Activated naive CD8-positive, alpha-beta T cell treated with anti-CD3 and anti-CD28 coated beads, Interleukin-2, amount 10 ng/mL, durations not matched to agents 7 days and 5 days (primary cell): ENCODE measurements at regions of chr5 and their contacts with region 1.

Region 1: DNA sequence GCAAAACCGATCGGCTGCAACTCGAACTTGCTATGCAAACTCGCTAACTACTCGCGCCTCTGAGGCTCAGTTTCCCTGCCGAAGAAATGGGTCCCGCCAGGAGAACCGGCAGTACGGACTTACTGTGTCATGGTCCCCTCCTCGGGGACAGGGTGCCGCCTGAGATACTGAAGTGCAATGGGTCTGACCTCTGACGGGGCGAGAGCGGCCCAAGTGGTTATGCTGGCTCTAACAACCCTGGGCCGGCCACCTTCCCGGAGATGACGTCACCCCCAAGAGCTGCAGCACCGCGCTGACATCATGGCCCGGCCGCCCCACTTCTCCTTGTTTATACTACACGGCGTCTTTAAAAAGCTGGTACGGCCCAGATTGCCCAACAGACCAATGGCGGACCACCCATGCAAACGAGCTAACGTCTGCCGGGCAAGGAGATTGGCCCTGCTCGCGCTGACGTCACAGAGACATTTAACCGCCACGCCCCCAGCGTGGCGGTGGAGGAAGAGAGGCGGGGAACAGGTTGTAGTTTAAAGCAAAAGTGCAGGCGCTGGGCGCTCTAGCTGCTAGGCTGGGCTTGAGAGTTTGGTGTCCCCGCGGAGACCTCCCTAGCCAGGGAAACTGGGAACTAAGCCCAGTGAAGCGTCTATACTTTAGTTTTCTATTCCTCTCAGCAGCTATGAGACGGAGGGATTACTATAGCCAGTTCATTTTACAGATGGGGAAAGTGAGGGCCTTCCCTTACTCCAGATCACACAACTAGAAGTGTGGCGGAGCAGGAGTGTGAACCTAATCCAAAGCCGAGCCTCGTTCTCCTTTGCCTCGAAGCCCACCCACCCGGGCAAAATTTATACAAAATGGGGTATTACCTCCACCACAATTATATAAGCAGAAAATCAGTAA is 654 bp upstream of the RNF44 start:
- DNase-seq: peak; percentile 89
- ATAC-seq: peak; percentile 70
- H3K4me3 Mint-ChIP-seq: peak overlapping the region; percentile 100
- H3K27ac Mint-ChIP-seq: peak overlapping the region; percentile 99
- H3K4me1 Mint-ChIP-seq: peaks cover 63% of the 10 kb centered on the region
- H3K27me3 Mint-ChIP-seq: no peaks in the 10 kb centered on the region

Region 2: GRCh38 chr5:176388444-176389134 is 149.3 kb before region 1 on chr5 and contains the starts of genes HIGD2A and NOP16:
- POLR2A ChIA-PET with region 1: interaction called, 13 read pairs
- DNase-seq: peak; percentile 94
- ATAC-seq: peak; percentile 91
- H3K4me3 Mint-ChIP-seq: peak within 1 kb of the TSS; percentile 100
- H3K27ac Mint-ChIP-seq: peak within 1 kb of the TSS; percentile 99
- H3K4me1 Mint-ChIP-seq: peaks cover 27% of the 10 kb centered on the region
- H3K27me3 Mint-ChIP-seq: no peaks in the 10 kb centered on the region
- total RNA-seq, gene HIGD2A: 97.6 to 97.7 TPM
- total RNA-seq, gene NOP16: 27.5 to 30.3 TPM

Region 3: DNA sequence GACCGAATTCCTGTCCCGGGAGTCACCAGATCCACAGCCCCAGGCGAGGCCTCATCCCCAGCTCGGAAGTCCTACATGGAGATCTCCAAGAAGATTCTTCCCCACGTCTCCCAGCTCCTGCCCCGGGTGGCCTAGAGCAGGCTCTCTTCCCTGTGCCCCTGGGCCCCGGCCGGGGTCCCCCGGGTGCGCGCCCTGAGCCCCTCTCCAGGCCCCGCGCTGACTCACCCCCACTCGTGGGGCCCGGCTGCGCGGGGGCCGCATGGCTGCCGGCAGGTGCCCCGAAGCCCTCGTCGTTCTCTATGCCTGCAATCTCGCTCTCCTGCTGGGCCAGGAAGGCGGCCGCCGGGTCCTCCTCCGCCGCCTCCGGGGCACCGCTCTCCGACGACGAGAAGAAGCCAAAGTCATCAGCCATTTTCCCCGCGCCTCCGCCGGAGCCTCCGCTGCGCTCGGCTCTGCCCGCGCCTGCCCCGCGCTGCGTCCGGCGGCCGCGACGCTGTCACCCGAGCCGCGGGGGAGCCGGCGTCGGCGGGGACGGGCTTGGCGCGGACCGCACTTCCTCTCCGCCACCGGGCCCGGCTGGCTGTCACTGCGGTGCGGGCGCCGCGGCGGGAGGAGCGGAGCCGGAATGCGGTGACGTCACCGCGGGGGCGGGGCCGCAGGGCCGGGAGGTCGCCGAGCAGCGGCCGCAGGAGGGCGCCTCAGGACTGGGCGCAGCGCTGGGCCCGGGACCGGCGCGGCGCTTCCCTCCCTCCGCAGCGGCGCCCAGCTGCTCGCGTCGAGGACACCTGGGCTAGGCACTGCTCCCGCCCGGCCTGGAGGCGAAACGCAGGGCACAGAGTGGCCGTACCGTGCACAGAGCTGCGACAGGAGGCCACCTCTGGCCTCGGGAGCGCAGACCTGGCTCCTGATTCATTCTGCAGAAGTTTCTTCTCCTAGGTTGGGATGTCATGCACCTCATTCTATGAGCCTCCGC is 121.6 kb before region 1 on chr5 and contains the start of gene CLTB:
- POLR2A ChIA-PET with region 1: interaction called, 20 read pairs
- DNase-seq: peak; percentile 89
- ATAC-seq: peak; percentile 96
- H3K4me3 Mint-ChIP-seq: peak within 1 kb of the TSS; percentile 84
- H3K27ac Mint-ChIP-seq: peak within 1 kb of the TSS; percentile 77
- H3K4me1 Mint-ChIP-seq: peaks cover 24% of the 10 kb centered on the region
- H3K27me3 Mint-ChIP-seq: peaks cover 17% of the 10 kb centered on the region
- total RNA-seq, gene CLTB: 52.8 to 53.1 TPM

Region 4: GRCh38 chr5:176447982-176448608 is 89.8 kb before region 1 on chr5 and contains the start of gene FAF2:
- POLR2A ChIA-PET with region 1: interaction called, 60 read pairs
- DNase-seq: peak; percentile 100
- ATAC-seq: peak; percentile 98
- H3K4me3 Mint-ChIP-seq: peak within 1 kb of the TSS; percentile 98
- H3K27ac Mint-ChIP-seq: peak within 1 kb of the TSS; percentile 97
- H3K4me1 Mint-ChIP-seq: peaks cover 24% of the 10 kb centered on the region
- H3K27me3 Mint-ChIP-seq: peaks cover 3% of the 10 kb centered on the region
- total RNA-seq, gene FAF2: 32.4 TPM

Region 5: DNA sequence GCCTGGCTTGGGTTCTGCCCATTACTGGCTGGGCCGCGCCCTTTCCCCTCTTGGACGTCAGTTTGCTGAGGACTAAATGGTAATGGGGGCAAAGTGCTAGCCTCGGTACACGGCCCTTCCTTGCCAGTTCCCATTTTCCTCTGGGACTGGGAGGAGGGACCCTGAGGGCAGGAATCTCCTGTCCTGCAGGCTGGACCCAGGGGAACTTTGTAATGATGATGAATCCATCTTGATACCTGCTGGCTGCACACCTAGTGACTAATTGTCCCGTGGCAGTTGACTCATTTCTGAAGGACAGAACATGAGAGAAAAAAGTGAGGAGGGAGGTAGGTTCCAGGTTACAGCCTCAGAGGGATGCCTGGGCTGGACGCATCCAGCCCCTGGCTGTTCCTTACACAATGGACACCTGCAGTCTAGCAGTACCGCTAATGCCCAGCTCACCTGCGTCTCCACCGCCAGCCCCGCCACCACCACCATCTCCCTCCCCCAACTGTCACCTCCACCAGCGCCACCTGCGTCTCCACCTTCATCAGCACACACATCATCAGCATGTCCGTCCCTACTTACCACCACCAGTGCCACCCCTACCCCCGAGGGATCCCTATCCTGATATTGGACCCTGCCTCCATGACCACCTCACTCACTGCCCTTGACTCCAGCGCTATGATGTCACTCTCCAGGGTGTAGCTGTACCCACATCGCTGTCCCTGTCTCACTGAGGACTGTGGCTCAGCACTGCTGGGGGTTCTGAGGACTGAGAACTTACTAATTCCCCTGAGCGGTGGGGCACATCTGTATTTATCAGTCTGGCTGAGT is 15.6 kb after region 1 on chr5:
- POLR2A ChIA-PET with region 1: interaction called, 22 read pairs
- DNase-seq: no peak
- ATAC-seq: no peak
- H3K4me3 Mint-ChIP-seq: no peak overlapping the region
- H3K27ac Mint-ChIP-seq: no peak overlapping the region
- H3K4me1 Mint-ChIP-seq: peaks cover 33% of the 10 kb centered on the region
- H3K27me3 Mint-ChIP-seq: no peaks in the 10 kb centered on the region

Region 6: GRCh38 chr5:176583081-176583480 is 45.2 kb after region 1 on chr5:
- POLR2A ChIA-PET with region 1: no interaction called
- DNase-seq: no peak
- ATAC-seq: no peak
- H3K4me3 Mint-ChIP-seq: no peak overlapping the region
- H3K27ac Mint-ChIP-seq: no peak overlapping the region
- H3K4me1 Mint-ChIP-seq: no peaks in the 10 kb centered on the region
- H3K27me3 Mint-ChIP-seq: no peaks in the 10 kb centered on the region

Region 7: DNA sequence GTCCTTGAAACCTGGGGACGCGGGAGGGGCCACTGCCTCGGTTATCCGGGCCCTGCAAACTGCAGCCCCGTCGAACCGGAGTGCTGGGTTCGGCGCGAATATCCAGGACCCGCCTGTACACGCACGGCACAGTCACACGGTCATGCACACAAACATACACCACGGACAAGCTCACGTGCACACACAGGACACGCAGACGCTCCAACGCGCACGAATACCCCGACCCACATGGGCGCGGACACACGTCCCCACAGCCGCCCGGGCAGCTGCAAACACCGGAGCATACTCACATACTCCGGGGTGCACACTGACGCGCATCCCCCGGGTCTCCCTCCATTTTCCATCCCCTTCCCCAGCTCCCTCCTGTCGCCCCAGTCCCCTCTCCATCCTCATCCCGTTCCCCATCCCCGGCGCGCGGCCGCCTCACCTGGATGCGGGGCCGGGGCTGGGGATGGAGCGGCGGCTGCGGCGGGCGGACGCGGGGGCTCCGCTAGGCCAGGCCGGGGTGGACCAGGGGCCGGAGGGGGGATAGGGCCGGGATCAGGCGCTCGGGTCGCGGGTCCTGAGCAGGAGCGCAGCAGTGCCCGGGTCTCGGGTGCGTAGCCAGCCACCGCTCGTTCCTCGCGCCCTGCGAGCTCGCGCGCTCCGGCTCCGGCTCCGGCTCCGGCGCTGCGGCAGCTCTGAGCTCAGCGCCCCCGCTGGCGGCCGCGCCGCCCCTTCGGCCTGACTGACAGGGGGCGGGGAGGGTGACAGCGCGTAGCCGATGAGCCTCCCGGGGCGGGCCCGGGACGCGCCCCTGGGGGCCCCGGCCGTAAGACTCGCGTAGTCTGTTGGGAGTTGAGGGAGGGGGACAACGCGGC is 92.2 kb after region 1 on chr5 and contains the starts of genes EIF4E1B and SNCB:
- POLR2A ChIA-PET with region 1: no interaction called
- DNase-seq: peak; percentile 78
- ATAC-seq: peak; percentile 92
- H3K4me3 Mint-ChIP-seq: peak within 1 kb of the TSS; percentile 64
- H3K27ac Mint-ChIP-seq: no peak within 1 kb of the TSS
- H3K4me1 Mint-ChIP-seq: peaks cover 17% of the 10 kb centered on the region
- H3K27me3 Mint-ChIP-seq: peaks cover 75% of the 10 kb centered on the region
- total RNA-seq, gene EIF4E1B: not detected
- total RNA-seq, gene SNCB: 0.28 TPM in 1 of 2 experiments, not detected in the other

Region 8: GRCh38 chr5:176647030-176647866 is 109.4 kb after region 1 on chr5 and contains the start of gene TSPAN17:
- POLR2A ChIA-PET with region 1: interaction called, 13 read pairs
- DNase-seq: peak; percentile 99
- ATAC-seq: peak; percentile 82
- H3K4me3 Mint-ChIP-seq: peak within 1 kb of the TSS; percentile 89
- H3K27ac Mint-ChIP-seq: peak within 1 kb of the TSS; percentile 86
- H3K4me1 Mint-ChIP-seq: peaks cover 35% of the 10 kb centered on the region
- H3K27me3 Mint-ChIP-seq: no peaks in the 10 kb centered on the region
- total RNA-seq, gene TSPAN17: 39.6 to 40.7 TPM

Region 9: DNA sequence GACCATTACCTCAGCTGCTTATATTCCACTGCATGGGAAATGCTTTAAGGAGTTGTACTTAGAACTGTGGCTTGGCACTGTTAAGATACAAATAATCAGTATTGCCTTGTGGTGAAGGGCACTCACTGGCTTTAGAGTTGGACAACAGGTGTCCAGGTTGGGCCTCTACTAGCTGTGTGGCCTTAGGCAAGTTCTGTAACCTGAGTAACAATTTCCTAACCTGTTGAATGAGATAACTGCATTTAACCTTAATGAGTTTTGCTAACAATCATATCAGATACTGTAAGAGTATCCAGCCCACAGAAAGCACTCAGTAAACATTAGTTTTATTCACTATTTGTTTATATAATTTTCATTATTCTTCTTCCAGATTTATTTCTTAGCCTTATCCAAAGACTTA is 378.5 kb after region 1 on chr5:
- POLR2A ChIA-PET with region 1: no interaction called
- DNase-seq: no peak
- ATAC-seq: no peak
- H3K4me3 Mint-ChIP-seq: no peak overlapping the region
- H3K27ac Mint-ChIP-seq: no peak overlapping the region
- H3K4me1 Mint-ChIP-seq: peaks cover 8% of the 10 kb centered on the region
- H3K27me3 Mint-ChIP-seq: no peaks in the 10 kb centered on the region